ENCODE measurements at regions of chr11 and their contacts with region 1.

Region 1: DNA sequence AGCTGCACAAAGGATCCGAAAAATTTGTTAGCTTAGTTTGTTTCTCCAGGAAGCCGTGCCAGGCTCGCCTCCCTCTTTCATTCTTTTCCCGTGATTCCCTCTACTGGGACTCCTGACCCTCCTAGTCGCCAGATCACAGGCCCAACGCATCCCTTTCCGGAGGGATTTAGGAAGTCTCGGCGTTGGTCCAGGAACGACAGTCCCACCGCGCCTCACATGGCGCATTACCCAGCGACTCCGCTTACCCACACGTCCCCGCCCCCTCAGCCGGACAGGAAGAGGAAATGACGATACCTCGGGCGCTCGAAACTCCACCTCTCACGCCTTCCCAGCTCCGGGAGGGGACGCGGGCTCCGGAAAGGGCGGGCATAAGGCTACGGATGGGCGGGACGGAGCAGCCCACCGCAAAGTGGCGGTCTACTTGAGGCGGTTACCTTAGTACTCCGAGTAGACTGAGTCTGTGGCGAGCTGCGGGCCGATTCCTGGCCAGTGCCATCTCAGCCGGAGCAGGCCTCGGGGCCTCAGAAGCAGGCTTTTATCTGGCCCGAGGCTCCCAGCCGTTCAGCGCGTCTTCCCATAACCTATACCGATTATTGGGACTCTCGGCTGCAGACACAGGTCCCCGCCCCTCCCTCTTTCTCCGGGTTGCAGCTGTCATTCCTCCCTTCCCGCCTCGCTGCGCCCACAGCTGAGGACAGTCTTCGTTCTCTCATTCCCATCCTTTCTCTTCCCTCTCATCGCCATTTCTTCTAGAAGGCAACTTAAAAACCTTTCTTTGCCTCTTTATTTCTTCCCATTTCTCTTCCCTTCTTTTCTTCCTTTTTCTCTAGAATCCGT is at the start of gene CCDC15:
- DNase-seq: peak; percentile 99
- total RNA-seq, gene CCDC15: 0.24 TPM

Region 2: DNA sequence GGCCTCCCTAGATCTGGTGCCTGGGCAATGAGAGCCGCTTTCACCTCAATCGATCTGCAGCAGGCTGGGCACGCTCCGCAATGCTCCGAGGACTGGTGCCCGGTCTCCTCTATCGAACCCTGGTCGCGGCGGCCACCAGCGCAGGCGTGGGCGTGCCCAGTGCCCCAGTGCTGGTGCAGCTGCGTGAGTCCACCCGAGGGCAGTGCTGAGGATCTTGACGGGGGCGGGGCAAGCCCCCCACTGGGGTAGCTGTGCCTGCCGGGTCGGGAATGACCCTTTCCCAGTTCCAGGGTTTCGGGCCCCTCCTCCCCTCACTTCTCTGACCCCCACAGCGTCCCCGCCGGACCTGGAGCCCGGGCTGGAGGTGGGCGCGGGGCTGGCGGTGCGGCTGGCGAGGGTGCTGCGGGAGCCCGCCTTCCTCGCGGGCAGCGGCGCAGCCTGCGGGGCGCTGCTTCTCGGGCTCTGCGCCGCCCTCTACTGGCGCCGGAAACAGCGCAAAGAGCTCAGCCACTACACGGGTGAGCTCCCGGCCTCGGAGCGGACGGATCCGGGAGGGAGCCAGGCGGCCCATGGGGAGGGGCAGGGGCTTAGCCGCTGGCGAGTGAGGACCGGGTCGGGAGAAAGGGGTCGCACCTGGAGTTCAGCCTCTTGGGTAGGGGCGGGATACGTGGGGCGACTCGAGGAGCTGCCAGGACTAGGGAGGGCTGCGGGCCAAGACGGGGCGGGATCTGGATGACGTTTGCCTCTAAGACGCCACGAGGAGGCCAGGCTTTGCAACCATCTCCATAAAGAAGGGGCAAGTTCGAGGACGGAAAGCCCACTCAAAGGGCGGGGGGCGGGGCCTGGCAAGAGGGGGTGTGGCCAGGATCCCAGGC is 77.8 kb before region 1 on chr11:
- intact Hi-C with region 1: loop called (anchors 5 kb)
- DNase-seq: peak; percentile 91

Region 3: DNA sequence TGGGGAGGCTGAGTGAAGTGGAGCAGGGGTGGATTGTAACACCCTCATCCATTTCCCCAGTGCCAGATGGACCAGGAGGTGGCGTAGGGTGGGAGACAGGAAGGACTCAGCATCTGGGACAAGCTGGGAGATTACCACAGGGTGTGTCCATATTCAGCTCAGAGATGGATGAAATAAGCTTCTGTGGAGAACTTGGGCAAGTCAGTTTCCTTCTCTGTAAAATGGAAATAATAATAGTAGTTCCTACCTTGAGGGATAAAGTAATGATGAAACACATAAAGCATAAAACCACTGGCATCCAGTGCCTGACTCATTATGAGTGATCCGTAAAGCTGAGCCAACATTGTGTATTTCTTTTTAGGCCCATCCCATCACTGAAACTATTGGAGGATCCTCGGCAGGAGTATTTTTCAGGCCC is 55.7 kb before region 1 on chr11:
- intact Hi-C with region 1: no loop called
- DNase-seq: peak; percentile 63

Region 4: DNA sequence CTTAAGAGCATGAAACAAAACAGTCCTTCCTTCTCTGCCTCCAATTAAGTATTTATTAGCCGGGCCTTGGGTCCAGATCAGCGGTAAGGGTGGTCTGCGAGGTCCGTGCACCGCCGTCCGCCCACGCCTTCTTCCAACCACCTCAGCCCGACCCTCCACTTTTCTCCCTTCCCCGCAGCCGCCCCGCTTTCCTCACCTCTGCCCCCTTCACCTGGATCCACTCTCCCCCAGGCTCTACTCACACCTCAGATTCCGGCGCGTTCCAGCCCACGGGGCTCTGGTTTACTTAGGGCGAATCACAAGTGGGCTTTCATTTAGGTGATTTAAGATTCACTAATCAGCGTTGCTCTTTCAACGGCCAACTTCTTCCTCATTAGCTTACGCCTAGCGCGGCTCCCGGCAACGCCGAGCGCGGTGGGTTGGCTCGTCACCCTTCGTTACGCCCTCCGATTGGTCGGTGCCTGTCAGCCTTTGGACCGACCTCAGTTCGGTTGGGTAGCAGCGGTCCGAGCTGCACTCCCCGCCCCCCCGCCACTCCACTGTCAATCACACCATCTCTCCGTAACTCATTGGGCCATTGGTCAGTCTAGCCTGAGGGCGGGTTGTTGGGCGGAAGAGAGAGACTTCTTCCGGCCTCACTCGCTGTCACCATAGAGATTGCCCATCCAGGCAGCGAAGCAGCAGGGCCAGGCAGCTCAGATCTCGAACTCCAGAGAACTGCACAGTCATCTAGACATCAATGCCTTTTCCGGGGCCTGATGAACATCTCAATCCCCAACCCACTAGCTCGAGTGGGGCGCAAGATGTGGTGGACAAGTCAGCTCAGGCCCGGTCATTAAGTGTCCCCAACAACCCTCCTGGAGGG is 157.6 kb after region 1 on chr11 and contains the start of gene TMEM218:
- intact Hi-C with region 1: loop called (anchors 10 kb)
- DNase-seq: peak; percentile 100
- total RNA-seq, gene TMEM218: 8.7 TPM

Region 5: GRCh38 chr11:125887373-125888324 is 933.7 kb after region 1 on chr11 and contains the start of gene HYLS1:
- intact Hi-C with region 1: loop called (anchors 10 kb)
- DNase-seq: peak; percentile 96
- total RNA-seq, gene HYLS1: 2.3 TPM

Measured in cardiac septum (tissue), 1 donor.